Panc1 (cell line): ENCODE measurements at regions of chr17 and their contacts with region 1.

Region 1: DNA sequence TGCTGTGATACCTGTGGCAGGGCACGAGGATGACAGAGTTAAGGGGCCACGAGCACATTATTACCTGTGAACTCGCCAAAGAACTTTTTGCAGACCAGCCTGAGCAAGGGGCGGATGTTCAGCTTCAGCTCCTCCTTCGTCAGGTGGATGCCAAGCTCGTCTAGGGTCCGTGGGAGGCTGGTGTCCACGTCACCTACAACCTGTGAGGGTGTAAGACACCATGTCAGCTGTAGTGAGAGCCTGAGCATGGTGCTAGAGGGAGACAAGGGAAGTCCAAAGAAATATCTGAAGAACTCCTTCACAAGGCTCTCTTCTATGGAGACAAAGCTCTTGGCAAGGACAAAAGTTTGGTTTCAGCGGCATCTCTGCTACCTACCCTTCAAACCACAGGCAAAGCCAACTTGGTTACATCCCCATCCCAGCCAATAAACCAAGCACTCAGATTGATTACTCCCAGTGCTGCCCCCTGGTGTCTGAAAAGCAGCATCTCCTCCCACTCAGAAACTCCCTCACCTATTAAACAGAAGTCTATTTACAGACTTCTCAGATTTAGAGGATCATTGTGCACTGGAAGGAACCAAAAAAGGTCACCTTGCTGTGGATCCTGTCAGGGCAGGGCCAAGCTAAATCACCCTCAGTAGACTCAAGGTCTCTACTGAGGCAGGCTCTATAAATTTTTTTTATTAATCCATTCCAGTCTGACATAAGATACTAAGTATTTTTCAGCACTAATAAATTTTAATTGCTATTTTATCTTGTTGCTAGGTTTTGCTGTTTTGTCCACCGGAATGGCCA is 17.4 kb downstream of the HIGD1B start:
- DNase-seq: peak; percentile 47
- ATAC-seq: peak; percentile 83
- H3K4me3 ChIP-seq: no peak overlapping the region
- H3K27ac ChIP-seq: no peak overlapping the region
- H3K4me1 ChIP-seq: no peaks in the 10 kb centered on the region
- H3K27me3 ChIP-seq: no peaks in the 10 kb centered on the region
- CTCF ChIP-seq: peak; percentile 82

Region 2: DNA sequence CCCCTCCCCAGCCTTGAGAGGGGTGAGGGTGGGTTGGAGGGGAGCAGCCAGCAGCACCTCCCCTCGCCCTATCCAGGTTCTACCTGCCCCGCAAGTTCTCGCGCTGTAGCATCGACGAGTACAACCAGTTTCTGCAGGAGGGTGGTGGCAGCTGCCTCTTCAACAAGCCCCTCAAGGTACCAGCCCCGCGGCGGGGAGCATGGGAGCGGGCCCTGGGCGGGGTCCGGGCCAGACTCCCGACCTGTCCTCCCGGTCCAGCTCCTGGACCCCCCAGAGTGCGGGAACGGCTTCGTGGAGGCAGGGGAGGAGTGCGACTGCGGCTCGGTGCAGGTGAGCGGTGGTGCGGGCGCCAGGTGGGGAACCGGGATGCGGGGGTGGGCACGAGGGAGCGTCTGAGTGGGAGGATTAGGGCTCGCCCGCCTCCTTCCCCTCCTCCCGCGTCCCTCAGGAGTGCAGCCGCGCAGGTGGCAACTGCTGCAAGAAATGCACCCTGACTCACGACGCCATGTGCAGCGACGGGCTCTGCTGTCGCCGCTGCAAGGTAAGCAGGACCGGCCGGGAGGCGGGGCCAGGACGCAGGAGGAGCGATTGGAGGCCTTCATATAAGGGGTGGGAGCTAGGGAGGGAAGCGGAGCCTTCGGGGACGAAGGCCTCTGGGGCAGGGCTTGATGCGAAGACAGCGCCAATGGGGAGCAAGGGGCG is 89.8 kb before region 1 on chr17:
- CTCF ChIA-PET with region 1: interaction called, 5 read pairs
- POLR2A ChIA-PET with region 1: no interaction called
- in situ Hi-C with region 1: no loop called
- intact Hi-C with region 1: loop called (anchors 5 kb)
- DNase-seq: no peak
- ATAC-seq: peak; percentile 90
- H3K4me3 ChIP-seq: peak overlapping the region; percentile 58 to 65
- H3K27ac ChIP-seq: no peak overlapping the region
- H3K4me1 ChIP-seq: peaks cover 3% of the 10 kb centered on the region
- H3K27me3 ChIP-seq: no peaks in the 10 kb centered on the region
- CTCF ChIP-seq: peak; percentile 25